Endothelial cell of umbilical vein (primary cell): ENCODE measurements at regions of chr2 and their contacts with region 1.

Region 1: DNA sequence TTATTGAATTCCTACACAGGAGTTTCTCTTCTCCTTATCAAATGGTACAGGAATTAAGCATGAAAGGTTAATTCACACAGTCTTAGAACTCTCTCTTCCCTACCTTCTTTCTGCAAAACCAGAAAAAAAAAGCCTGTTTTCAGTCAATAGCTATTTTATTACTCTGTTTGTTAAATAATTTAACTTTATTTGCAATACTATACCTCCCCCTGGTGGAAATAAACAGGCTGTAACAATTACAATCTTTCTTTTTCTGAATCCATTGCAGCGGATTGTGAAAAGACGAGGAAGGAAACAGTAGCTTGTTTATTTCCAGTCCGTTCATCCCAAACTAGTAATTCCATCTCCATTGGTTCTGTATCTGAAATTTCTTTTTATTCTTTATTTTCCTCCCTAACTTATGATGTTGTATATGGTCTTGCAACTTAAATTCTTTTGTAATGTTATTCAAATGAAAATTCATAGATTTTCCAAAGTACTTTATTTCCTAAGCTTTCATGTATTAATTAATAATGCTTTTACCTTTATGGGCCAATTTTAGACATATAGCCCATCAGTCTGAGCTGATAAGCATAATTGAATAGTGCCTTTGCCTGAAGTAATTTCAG is 165.2 kb downstream of the SH3BP4 start:
- DNase-seq: peak; percentile 53
- H3K4me3 ChIP-seq: no peak overlapping the region
- H3K27ac ChIP-seq: no peak overlapping the region
- H3K4me1 ChIP-seq: no peaks in the 10 kb centered on the region
- H3K27me3 ChIP-seq: peaks cover 2 to 9% of the 10 kb centered on the region in 2 experiments
- CTCF ChIP-seq: peak; percentile 35 to 37
- POLR2A ChIP-seq: no peak

Region 2: GRCh38 chr2:233449081-233449901 is 1667.7 kb before region 1 on chr2:
- CTCF ChIA-PET with region 1: interaction called, 8 read pairs
- POLR2A ChIA-PET with region 1: no interaction called
- dilution Hi-C with region 1: no loop called
- intact Hi-C with region 1: loop called (anchors 5 kb)
- DNase-seq: peak; percentile 50
- H3K4me3 ChIP-seq: no peak overlapping the region
- H3K27ac ChIP-seq: no peak overlapping the region
- H3K4me1 ChIP-seq: no peaks in the 10 kb centered on the region
- H3K27me3 ChIP-seq: no peaks in the 10 kb centered on the region
- CTCF ChIP-seq: peak; percentile 76 to 80
- POLR2A ChIP-seq: no peak

Region 3: DNA sequence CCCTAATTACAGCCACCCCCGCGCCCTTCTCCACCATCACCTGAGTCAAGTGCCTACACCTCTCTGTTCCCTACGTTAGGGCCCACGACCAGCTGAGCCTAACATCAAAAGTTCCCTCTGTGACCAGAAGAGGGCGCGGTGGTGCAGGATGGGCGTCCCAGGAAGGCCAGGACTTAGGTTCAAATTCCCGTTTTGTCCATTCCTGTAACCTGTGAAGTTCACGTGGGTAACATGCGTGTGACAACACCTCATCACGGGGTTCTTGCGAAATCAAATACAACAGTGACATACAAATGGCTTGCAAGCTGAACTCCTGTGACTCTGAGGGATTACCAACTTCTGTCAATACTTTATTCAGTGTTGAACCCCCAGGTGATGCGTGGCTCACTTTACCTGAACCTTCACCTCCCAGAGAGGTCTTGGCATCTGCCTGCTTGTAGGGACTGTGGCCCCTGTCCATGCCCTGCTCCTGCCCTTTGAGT is 828.0 kb before region 1 on chr2:
- CTCF ChIA-PET with region 1: interaction called, 18 read pairs
- POLR2A ChIA-PET with region 1: no interaction called
- dilution Hi-C with region 1: no loop called
- intact Hi-C with region 1: loop called (anchors 5 kb)
- DNase-seq: peak; percentile 65
- H3K4me3 ChIP-seq: no peak overlapping the region
- H3K27ac ChIP-seq: no peak overlapping the region
- H3K4me1 ChIP-seq: peaks cover 37% of the 10 kb centered on the region
- H3K27me3 ChIP-seq: no peaks in the 10 kb centered on the region
- CTCF ChIP-seq: peak; percentile 75 to 88
- POLR2A ChIP-seq: no peak

Region 4: GRCh38 chr2:234533626-234534025 is 583.4 kb before region 1 on chr2:
- CTCF ChIA-PET with region 1: interaction called, 11 read pairs
- POLR2A ChIA-PET with region 1: no interaction called
- dilution Hi-C with region 1: no loop called
- intact Hi-C with region 1: no loop called
- DNase-seq: no peak
- H3K4me3 ChIP-seq: no peak overlapping the region
- H3K27ac ChIP-seq: no peak overlapping the region
- H3K4me1 ChIP-seq: no peaks in the 10 kb centered on the region
- H3K27me3 ChIP-seq: peaks cover 2 to 3% of the 10 kb centered on the region in 2 experiments
- CTCF ChIP-seq: no peak
- POLR2A ChIP-seq: no peak

Region 5: GRCh38 chr2:234555720-234556119 is 561.3 kb before region 1 on chr2:
- CTCF ChIA-PET with region 1: interaction called, 216 read pairs
- POLR2A ChIA-PET with region 1: no interaction called
- dilution Hi-C with region 1: loop called (anchors 25 kb)
- intact Hi-C with region 1: loop called (anchors 1 kb)
- DNase-seq: no peak
- H3K4me3 ChIP-seq: no peak overlapping the region
- H3K27ac ChIP-seq: no peak overlapping the region
- H3K4me1 ChIP-seq: no peaks in the 10 kb centered on the region
- H3K27me3 ChIP-seq: no peaks in the 10 kb centered on the region
- CTCF ChIP-seq: no peak
- POLR2A ChIP-seq: no peak

Region 6: GRCh38 chr2:234881413-234882241 is 235.4 kb before region 1 on chr2:
- CTCF ChIA-PET with region 1: interaction called, 14 read pairs
- POLR2A ChIA-PET with region 1: no interaction called
- dilution Hi-C with region 1: no loop called
- intact Hi-C with region 1: no loop called
- DNase-seq: peak; percentile 92
- H3K4me3 ChIP-seq: peak overlapping the region in 1 of 3 experiments; percentile 12
- H3K27ac ChIP-seq: peak overlapping the region; percentile 79
- H3K4me1 ChIP-seq: peaks cover 23% of the 10 kb centered on the region
- H3K27me3 ChIP-seq: no peaks in the 10 kb centered on the region
- CTCF ChIP-seq: peak; percentile 87 to 91
- POLR2A ChIP-seq: peak; percentile 23

Region 7: GRCh38 chr2:235595422-235596010 is 478.5 kb after region 1 on chr2:
- CTCF ChIA-PET with region 1: interaction called, 16 read pairs
- POLR2A ChIA-PET with region 1: no interaction called
- dilution Hi-C with region 1: no loop called
- intact Hi-C with region 1: no loop called
- DNase-seq: peak; percentile 85
- H3K4me3 ChIP-seq: no peak overlapping the region
- H3K27ac ChIP-seq: no peak overlapping the region
- H3K4me1 ChIP-seq: peaks cover 3% of the 10 kb centered on the region
- H3K27me3 ChIP-seq: no peaks in the 10 kb centered on the region
- CTCF ChIP-seq: peak; percentile 83
- POLR2A ChIP-seq: no peak